Sigmoid colon (tissue), 7 donors: ENCODE measurements at regions of chr3 and their contacts with region 1.

Region 1: GRCh38 chr3:79517766-79518413 is 249.9 kb downstream of the ROBO1 start:
- DNase-seq: no peak
- H3K4me3 ChIP-seq: no peak overlapping the region
- H3K27ac ChIP-seq: no peak overlapping the region
- H3K4me1 ChIP-seq: peaks cover 0 to 14% (median 0%) of the 10 kb centered on the region in 4 donors
- H3K27me3 ChIP-seq: no peaks in the 10 kb centered on the region
- CTCF ChIP-seq: peak in 2 of 4 experiments; percentile 9 to 17
- EP300 ChIP-seq: no peak
- POLR2A ChIP-seq: no peak

Region 2: DNA sequence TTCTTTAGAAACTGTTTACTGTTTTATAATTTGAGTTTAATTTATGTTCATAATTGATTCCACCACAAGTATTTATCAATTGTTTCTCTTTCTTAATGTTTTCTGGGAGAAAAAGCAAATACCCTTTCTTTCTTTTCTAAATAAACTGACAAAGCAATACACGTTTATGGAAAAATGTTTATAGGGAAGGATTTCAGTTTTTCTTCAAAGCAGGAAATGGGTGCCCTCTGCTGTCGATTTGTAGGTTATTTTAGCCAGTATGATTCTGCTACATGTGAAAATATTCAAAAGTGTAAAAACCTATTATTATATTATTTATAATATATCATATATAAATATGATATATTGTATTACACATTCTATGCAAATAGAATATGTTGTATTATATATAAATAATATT is 1170.9 kb after region 1 on chr3:
- intact Hi-C with region 1: loop called (anchors 5 kb)
- DNase-seq: no peak
- H3K4me3 ChIP-seq: no peak overlapping the region
- H3K27ac ChIP-seq: no peak overlapping the region
- H3K4me1 ChIP-seq: no peaks in the 10 kb centered on the region
- H3K27me3 ChIP-seq: no peaks in the 10 kb centered on the region
- CTCF ChIP-seq: peak in 1 of 4 experiments; percentile 11
- EP300 ChIP-seq: no peak
- POLR2A ChIP-seq: no peak